Activated CD8-positive, alpha-beta T cell treated with anti-CD3 and anti-CD28 coated beads for 36 hours (primary cell): ENCODE measurements at regions of chr5 and their contacts with region 1.

Region 1: DNA sequence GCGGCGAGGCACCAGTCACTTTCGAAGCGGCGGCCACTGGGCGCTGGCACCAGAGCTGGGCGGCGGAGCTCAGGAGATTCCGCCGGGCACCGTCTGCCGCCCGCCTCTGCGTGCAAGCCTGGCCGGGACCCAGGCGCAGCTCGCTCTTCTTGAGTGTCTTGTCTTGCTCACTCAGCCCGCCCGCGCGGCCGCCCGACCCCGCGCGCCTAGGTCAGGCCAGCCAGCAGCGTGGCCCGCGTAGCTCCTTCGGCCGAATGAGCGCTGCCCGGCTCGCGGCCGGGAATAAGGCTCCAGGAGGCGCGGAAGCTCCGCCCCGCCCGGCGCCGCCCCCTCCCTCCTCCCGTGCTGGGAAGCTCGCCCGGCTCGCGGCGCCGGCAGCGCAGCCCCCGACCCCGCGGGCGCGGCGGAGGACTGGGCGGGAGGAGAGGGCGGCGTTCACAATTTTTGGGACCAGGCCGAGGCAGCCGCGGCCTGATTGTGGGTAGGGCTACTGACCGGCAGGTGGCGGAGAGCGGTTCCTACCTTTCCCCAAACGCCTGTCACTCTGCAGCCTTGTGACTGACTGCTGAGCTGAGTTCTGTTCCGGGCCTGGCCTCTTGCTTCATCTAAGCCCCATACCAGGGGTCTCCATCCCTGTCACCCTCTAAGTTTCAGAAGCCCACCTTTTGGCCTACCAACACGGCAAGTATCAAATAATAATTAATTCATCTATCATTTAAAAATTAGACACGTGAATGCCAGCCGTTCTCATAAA is at the start of gene HBEGF:
- DNase-seq: peak; percentile 65
- ATAC-seq: peak; percentile 48
- H3K4me3 Mint-ChIP-seq: peak within 1 kb of the TSS; percentile 73
- H3K27ac Mint-ChIP-seq: peak within 1 kb of the TSS; percentile 44
- H3K4me1 Mint-ChIP-seq: peaks cover 36% of the 10 kb centered on the region
- H3K27me3 Mint-ChIP-seq: peaks cover 10% of the 10 kb centered on the region
- CTCF ChIP-seq: peak; percentile 52
- total RNA-seq, gene HBEGF: 5.1 to 6.4 TPM

Region 2: DNA sequence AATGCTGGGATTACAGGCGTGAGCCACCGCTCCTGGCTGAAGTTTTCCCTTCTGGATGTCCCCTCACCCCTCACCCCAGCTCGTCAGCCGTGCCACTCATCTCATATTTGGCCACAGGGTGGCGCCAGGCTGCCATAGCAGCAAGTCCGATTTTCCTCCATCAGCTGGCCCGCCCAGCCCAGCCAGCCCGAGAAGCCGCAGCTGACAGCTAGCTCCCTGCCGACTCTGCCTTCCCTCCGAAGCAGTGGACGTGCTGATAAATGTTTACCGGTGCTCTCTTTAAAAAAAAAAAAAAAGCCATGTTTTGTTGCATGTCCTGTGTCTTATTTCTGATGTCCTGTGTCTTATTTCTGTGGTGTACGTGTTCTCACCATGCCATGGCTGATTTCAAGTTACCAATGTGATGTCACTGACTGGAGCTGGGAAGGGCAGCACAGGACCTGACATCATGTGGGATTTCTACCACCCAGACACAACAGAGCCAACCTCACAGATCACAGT is 102.0 kb before region 1 on chr5:
- CTCF ChIA-PET with region 1: interaction called, 874 read pairs
- POLR2A ChIA-PET with region 1: interaction called, 5 read pairs
- intact Hi-C with region 1: no loop called
- DNase-seq: peak; percentile 91
- ATAC-seq: peak; percentile 77
- H3K4me3 Mint-ChIP-seq: no peak overlapping the region
- H3K27ac Mint-ChIP-seq: no peak overlapping the region
- H3K4me1 Mint-ChIP-seq: peaks cover 10% of the 10 kb centered on the region
- H3K27me3 Mint-ChIP-seq: no peaks in the 10 kb centered on the region
- CTCF ChIP-seq: peak; percentile 91

Region 3: GRCh38 chr5:140302786-140303639 is 43.5 kb before region 1 on chr5 and contains the start of gene PFDN1:
- CTCF ChIA-PET with region 1: interaction called, 16 read pairs
- POLR2A ChIA-PET with region 1: interaction called, 11 read pairs
- intact Hi-C with region 1: loop called (anchors 5 kb)
- DNase-seq: peak; percentile 97
- ATAC-seq: peak; percentile 100
- H3K4me3 Mint-ChIP-seq: peak within 1 kb of the TSS; percentile 96
- H3K27ac Mint-ChIP-seq: peak within 1 kb of the TSS; percentile 95
- H3K4me1 Mint-ChIP-seq: peaks cover 16% of the 10 kb centered on the region
- H3K27me3 Mint-ChIP-seq: no peaks in the 10 kb centered on the region
- CTCF ChIP-seq: no peak
- total RNA-seq, gene PFDN1: 49.1 to 50.6 TPM

Region 4: DNA sequence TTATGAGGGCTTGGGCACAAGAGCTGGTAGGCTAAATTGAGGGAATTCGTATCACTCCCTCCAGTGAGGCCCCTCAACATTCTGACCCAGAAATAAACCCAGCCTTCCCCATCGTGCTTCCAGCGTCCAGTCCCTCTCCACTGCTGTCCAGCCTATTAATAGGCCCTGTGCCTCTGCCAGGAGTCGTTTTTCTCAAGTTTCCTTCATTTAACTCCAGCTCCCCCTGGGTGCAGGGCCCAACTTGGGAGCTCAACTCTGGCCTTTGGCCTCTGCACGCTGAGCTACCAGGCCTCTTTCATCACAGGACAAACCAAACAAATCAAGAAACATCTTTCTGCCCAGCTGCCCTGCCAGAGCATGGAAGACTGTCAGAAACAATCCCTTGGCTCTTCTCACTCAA is 10.1 kb before region 1 on chr5:
- CTCF ChIA-PET with region 1: interaction called, 48 read pairs
- POLR2A ChIA-PET with region 1: interaction called, 4 read pairs
- intact Hi-C with region 1: no loop called
- DNase-seq: no peak
- ATAC-seq: no peak
- H3K4me3 Mint-ChIP-seq: no peak overlapping the region
- H3K27ac Mint-ChIP-seq: no peak overlapping the region
- H3K4me1 Mint-ChIP-seq: peaks cover 8% of the 10 kb centered on the region
- H3K27me3 Mint-ChIP-seq: no peaks in the 10 kb centered on the region
- CTCF ChIP-seq: no peak